ENCODE measurements at regions of chr13 and their contacts with region 1.

Region 1: GRCh38 chr13:31742097-31742734 is 2.9 kb downstream of the RXFP2 start:
- DNase-seq: peak in 4 of 5 donors; percentile 38 to 64 (median 60)
- ATAC-seq: peak in 3 of 4 donors; percentile 63 to 80 (median 79)
- H3K4me3 ChIP-seq: peak overlapping the region in 1 of 12 donors; percentile 20
- H3K27ac ChIP-seq: no peak overlapping the region
- H3K4me1 ChIP-seq: peaks cover 0 to 12% (median 0%) of the 10 kb centered on the region in 12 donors
- H3K27me3 ChIP-seq: peaks cover 0 to 13% (median 0%) of the 10 kb centered on the region in 9 donors
- CTCF ChIP-seq: peak in 11 of 12 donors; percentile 95 to 100 (median 99)
- POLR2A ChIP-seq: no peak

Region 2: DNA sequence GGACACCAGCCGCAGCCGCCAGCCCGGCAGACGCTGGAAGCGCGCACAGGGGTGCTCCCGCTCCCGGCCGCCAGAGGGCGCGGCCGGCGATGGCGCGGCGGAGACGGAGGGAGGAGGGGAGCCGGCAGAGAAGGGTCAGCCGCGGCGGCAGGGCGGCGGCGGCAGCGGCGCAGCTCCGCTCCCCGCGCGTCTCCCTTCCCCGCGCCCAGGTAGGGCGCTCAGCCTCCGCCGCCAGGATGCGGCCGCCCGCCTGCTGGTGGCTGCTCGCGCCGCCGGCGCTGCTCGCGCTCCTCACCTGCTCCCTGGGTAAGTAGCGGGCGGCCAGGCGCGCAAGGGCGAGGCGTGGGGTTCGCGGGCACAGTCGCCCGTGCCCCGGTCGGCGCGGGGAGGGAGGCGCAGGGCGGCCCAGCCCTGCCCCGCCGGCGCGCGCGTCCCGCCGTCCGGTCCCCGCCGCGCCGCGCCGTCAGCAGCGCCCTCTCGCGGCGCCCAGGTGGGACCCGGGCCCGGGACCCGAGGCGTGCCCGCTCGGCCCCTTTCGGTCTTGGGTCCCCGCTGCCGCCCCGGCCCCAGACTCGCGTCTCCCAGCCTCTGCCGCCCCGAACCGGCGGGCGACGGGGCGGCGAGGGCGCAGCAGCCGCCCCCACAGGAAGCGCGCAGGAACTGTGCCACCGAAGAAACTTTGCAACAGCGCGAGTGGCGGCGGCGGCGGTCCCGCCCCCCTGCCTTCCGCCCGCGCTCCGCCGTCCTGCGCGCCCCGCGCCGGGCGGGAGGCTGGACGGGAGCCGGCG is 542.2 kb before region 1 on chr13 and contains the start of gene B3GLCT:
- intact Hi-C with region 1: loop called in 2 of 10 experiments (anchors 1 to 10 kb)
- DNase-seq: peak; percentile 79 to 92 (median 81)
- ATAC-seq: peak; percentile 64 to 91 (median 85)
- H3K4me3 ChIP-seq: peak within 1 kb of the TSS; percentile 52 to 99 (median 82)
- H3K27ac ChIP-seq: peak within 1 kb of the TSS; percentile 93 to 100 (median 98)
- H3K4me1 ChIP-seq: peaks cover 0 to 46% (median 19%) of the 10 kb centered on the region in 12 donors
- H3K27me3 ChIP-seq: no peaks in the 10 kb centered on the region
- CTCF ChIP-seq: peak; percentile 60 to 95 (median 84)
- POLR2A ChIP-seq: no peak
- total RNA-seq, gene B3GLCT: 9.5 to 27.2 (median 20.9) TPM

Region 3: GRCh38 chr13:31424117-31424729 is 318.0 kb before region 1 on chr13:
- intact Hi-C with region 1: loop called in 1 of 10 experiments (anchors 5 kb)
- DNase-seq: peak; percentile 64 to 82 (median 76)
- ATAC-seq: peak; percentile 87 to 97 (median 94)
- H3K4me3 ChIP-seq: no peak overlapping the region
- H3K27ac ChIP-seq: no peak overlapping the region
- H3K4me1 ChIP-seq: peaks cover 0 to 7% (median 0%) of the 10 kb centered on the region in 12 donors
- H3K27me3 ChIP-seq: no peaks in the 10 kb centered on the region
- CTCF ChIP-seq: peak; percentile 74 to 92 (median 88)
- POLR2A ChIP-seq: no peak

Region 4: DNA sequence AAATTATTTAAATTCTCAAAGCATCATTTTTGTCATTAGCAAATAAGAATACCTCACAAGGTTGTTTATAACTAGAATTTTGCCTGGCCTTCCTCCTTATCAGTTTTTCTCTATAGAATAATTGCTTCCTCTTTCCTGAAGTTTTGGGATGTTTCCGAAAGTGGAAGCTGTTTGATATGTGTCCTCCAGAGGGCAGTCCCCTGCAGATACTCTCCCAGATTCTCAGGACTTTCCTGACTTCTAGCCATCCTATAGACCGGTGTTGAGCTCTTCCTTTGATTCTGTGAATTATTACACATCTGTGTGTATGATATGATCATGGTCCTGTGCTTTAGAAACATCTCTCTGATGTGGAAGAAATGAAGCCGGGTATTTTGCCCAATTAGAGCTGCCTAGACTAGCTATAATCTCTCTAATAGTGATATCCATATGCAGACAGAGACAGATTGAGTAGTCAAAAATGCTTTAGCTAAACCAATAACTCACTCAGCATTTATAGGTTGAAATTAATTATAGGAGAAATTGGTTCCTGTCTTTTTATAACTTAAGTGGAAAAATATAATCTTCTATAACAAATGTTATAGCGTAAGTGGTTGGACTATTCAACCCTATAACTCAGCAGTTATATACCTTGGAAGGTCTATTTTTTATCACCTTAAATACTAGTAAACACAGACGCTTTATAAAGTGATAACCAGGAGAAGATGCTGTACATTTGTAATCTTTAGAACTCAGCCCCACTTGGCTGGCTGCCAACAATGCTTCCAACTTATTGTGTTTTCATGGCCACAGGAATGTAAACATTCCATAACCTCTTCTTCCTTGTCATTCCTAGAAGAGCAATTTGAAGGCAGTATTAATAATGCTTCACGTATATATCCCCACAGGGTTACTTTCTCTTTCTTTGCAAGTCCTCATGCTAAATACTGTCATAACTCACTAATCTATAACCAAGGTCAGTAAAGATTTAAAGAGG is 203.9 kb before region 1 on chr13:
- intact Hi-C with region 1: loop called in 8 of 10 experiments (anchors 5 to 10 kb)
- DNase-seq: no peak
- ATAC-seq: no peak
- H3K4me3 ChIP-seq: no peak overlapping the region
- H3K27ac ChIP-seq: no peak overlapping the region
- H3K4me1 ChIP-seq: no peaks in the 10 kb centered on the region
- H3K27me3 ChIP-seq: peaks cover 0 to 5% (median 0%) of the 10 kb centered on the region in 9 donors
- CTCF ChIP-seq: peak in 11 of 12 donors; percentile 9 to 66 (median 50)
- POLR2A ChIP-seq: no peak

Region 5: DNA sequence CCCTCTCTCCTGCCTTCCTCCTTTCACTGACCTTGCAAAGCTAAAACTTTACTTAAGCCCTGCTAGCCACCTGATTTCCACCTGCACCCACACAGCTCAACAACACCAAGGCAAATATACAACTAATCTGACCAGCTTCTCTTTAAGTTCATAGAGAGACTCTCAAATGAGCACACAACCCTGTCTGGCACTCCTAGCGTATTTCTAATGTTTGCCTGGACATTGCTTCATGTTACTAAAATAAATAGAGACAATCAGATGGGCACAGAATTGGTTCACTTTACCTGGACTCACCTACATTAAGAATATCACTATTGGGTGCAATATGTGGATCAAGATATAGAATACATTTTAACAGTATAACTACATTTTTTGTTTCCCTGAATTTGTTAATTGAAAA is 36.1 kb before region 1 on chr13:
- intact Hi-C with region 1: no loop called
- DNase-seq: no peak
- ATAC-seq: no peak
- H3K4me3 ChIP-seq: no peak overlapping the region
- H3K27ac ChIP-seq: no peak overlapping the region
- H3K4me1 ChIP-seq: peaks cover 0 to 6% (median 0%) of the 10 kb centered on the region in 12 donors
- H3K27me3 ChIP-seq: no peaks in the 10 kb centered on the region
- CTCF ChIP-seq: no peak
- POLR2A ChIP-seq: no peak

Region 6: GRCh38 chr13:31786011-31786410 is 43.8 kb after region 1 on chr13:
- intact Hi-C with region 1: no loop called
- DNase-seq: no peak
- ATAC-seq: peak; percentile 58 to 85 (median 74)
- H3K4me3 ChIP-seq: no peak overlapping the region
- H3K27ac ChIP-seq: no peak overlapping the region
- H3K4me1 ChIP-seq: peaks cover 0 to 7% (median 0%) of the 10 kb centered on the region in 12 donors
- H3K27me3 ChIP-seq: peaks cover 0 to 6% (median 0%) of the 10 kb centered on the region in 9 donors
- CTCF ChIP-seq: no peak
- POLR2A ChIP-seq: no peak